ENCODE measurements at regions of chr20 and their contacts with region 1.

Region 1: DNA sequence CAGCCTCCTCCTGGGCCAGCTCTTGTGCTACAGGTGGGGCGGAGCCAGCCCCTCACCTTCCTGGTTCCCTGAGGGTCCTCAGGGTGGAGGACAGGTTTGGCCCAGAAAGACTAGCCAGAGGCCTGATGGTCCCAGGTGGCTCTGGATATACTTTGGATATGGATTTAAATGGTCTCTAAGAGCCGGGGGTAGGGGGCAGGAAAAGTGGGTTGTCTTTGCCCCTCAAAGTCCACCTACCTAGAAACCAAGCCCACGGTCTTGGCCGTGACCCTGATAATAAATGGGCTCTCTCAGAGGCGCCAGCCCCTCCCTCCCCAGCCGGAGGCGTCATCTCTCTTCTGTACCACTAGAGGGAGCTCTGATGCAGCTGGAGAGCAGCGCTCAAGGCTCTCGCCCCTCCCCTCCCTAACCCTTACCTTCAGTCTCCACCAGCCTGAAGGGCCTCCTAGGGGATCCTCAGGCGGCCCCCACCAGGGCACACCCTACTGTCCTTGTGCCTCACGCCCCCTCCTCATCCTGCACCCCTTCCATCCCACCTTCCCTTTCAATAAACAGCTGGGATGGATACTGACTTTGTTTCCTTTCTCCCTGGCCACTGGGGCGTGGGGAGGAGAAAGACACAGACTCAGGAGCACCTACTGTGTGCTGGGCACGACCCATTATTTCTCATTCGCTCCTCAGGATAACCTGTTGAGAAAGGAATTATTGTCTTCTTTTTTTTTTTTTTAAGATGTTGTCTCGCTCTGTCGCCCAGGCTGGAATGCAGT is 7.6 kb downstream of the NRSN2 start:
- DNase-seq: peak; percentile 77
- H3K4me3 ChIP-seq: no peak overlapping the region
- H3K27ac ChIP-seq: no peak overlapping the region
- H3K4me1 ChIP-seq: no peaks in the 10 kb centered on the region
- H3K27me3 ChIP-seq: no peaks in the 10 kb centered on the region
- CTCF ChIP-seq: peak; percentile 89

Region 2: DNA sequence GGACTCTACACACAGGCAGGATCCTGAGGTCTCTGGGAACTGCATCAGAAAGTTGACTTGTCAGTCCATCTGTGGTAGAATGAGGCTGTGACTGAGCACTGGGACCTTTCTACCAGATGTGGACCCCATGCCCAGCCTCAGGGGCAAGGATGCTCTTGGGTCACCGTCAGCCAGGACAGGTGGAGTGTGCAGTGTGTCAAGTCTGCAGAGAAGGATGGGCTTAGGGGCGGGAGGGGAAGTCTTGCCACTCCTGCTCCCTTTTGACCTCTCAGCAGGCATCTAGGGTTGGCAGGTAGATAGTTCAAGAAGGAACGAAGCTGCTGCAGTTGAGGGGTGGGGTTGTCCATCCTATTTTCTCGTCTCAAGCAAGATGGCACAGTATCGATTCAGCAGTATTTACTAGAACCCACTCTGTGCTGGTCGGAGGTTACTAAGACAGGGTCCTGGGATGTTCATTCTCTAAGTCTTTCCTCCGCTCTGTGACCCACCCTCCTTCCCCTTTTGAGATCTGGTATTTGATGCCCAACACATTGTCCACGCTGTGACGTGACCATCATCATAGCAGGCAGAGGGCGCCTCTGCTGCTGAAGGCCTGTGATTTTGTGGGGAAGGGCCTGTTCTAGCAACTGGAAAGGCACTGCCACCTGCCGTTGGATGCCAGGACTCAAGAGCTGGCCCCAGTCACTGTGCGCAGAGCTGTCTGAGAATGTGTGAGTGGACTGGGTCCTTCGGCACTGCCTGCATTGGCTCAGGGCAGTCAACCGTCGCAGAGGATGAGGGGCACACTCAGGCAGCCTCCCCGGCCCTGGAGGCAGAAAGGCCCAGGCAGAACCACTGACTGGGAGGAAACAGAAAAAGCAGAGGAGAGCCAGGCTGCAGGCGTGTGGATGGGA is 76.8 kb after region 1 on chr20:
- intact Hi-C with region 1: loop called (anchors 5 kb)
- DNase-seq: peak; percentile 41
- H3K4me3 ChIP-seq: no peak overlapping the region
- H3K27ac ChIP-seq: no peak overlapping the region
- H3K4me1 ChIP-seq: no peaks in the 10 kb centered on the region
- H3K27me3 ChIP-seq: no peaks in the 10 kb centered on the region
- CTCF ChIP-seq: peak; percentile 33

Region 3: GRCh38 chr20:478949-479429 is 124.5 kb after region 1 on chr20:
- intact Hi-C with region 1: loop called (anchors 5 kb)
- DNase-seq: peak; percentile 43
- H3K4me3 ChIP-seq: no peak overlapping the region
- H3K27ac ChIP-seq: no peak overlapping the region
- H3K4me1 ChIP-seq: peaks cover 4% of the 10 kb centered on the region
- H3K27me3 ChIP-seq: no peaks in the 10 kb centered on the region
- CTCF ChIP-seq: peak; percentile 44

Region 4: GRCh38 chr20:645318-646106 is 291.0 kb after region 1 on chr20:
- intact Hi-C with region 1: loop called (anchors 5 kb)
- DNase-seq: peak; percentile 75
- H3K4me3 ChIP-seq: no peak overlapping the region
- H3K27ac ChIP-seq: no peak overlapping the region
- H3K4me1 ChIP-seq: no peaks in the 10 kb centered on the region
- H3K27me3 ChIP-seq: peaks cover 7% of the 10 kb centered on the region
- CTCF ChIP-seq: peak; percentile 94

Region 5: DNA sequence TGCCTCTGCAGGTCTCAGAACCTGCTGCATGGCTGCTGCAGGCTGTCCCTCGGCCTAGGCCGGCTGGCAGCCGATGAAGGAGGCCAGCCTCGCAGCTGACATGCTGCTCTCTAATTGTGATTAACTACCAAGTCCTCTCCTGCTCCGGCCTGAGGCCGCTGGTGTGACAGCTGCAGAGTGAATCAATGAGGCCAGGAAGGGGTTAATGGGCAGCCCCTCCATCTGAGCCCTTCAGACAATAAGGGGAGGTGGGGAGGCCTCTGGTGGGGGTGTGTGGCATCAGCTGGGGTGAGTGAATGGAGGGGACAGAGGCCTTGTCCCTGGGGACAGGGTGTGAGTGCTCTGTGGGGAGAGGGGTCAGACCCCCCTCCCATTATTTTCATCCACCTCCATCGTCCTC is 379.4 kb after region 1 on chr20:
- intact Hi-C with region 1: loop called (anchors 10 kb)
- DNase-seq: no peak
- H3K4me3 ChIP-seq: no peak overlapping the region
- H3K27ac ChIP-seq: no peak overlapping the region
- H3K4me1 ChIP-seq: no peaks in the 10 kb centered on the region
- H3K27me3 ChIP-seq: peaks cover 5% of the 10 kb centered on the region
- CTCF ChIP-seq: no peak

Measured in colonic mucosa (tissue), 4 donors.